ENCODE measurements at regions of chr11 and their contacts with region 1.

Region 1: GRCh38 chr11:71448257-71449171 is at the start of gene DHCR7:
- DNase-seq: peak; percentile 93 to 96 (median 95)
- H3K4me3 ChIP-seq: peak within 1 kb of the TSS; percentile 63 to 95 (median 87)
- H3K27ac ChIP-seq: peak within 1 kb of the TSS; percentile 58 to 78
- H3K4me1 ChIP-seq: peaks cover 13 to 57% (median 48%) of the 10 kb centered on the region in 4 experiments
- H3K27me3 ChIP-seq: no peaks in the 10 kb centered on the region

Region 2: GRCh38 chr11:71425855-71426254 is 22.7 kb before region 1 on chr11:
- CTCF ChIA-PET with region 1: no interaction called
- POLR2A ChIA-PET with region 1: no interaction called
- DNase-seq: no peak
- H3K4me3 ChIP-seq: no peak overlapping the region
- H3K27ac ChIP-seq: no peak overlapping the region
- H3K4me1 ChIP-seq: no peaks in the 10 kb centered on the region
- H3K27me3 ChIP-seq: peaks cover 0 to 7% (median 0%) of the 10 kb centered on the region in 5 experiments

Region 3: DNA sequence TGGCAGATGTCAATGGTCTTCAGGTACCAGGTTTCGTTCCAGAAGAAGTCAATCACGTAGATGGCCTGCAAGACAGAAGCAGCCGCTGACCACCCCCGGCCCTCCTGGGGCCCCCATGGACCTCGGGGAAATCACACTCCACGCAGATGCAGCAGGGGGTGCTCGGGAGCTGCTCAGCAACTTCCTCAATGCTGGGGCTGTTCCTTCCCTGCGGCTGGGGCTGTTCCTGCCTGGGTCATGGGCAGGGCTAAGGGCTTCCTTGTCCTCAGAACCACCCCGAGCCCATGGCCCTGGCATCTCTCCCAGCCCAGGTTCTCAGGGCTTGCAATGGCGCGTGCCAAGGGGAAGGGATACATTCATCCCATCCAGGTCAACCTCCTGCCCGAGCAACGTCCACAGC is 10.6 kb before region 1 on chr11:
- CTCF ChIA-PET with region 1: interaction called, 11 read pairs
- POLR2A ChIA-PET with region 1: no interaction called
- DNase-seq: no peak
- H3K4me3 ChIP-seq: no peak overlapping the region
- H3K27ac ChIP-seq: no peak overlapping the region
- H3K4me1 ChIP-seq: no peaks in the 10 kb centered on the region
- H3K27me3 ChIP-seq: no peaks in the 10 kb centered on the region

Region 4: DNA sequence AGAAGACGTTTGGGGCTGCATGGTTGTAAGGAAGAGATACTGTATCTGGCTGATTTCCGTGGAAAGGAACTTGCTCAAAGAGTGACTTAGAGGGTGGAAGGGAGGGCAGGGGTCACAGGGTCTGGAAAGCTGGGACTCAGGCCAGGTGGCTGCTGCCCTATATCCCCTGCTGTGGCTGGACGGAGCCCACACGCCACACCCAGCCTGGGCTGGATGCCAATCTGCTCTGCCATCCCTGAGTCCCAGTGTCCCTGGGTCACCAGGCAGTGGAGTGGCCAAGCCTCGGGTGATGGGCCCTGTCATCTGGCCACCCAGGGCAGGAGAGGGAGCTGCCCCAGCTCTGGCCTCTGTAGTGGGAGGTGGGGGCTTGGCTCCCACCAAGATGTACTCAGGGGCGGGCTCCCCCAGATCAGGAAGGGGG is 52.1 kb after region 1 on chr11:
- CTCF ChIA-PET with region 1: no interaction called
- POLR2A ChIA-PET with region 1: no interaction called
- DNase-seq: no peak
- H3K4me3 ChIP-seq: no peak overlapping the region
- H3K27ac ChIP-seq: no peak overlapping the region
- H3K4me1 ChIP-seq: no peaks in the 10 kb centered on the region
- H3K27me3 ChIP-seq: no peaks in the 10 kb centered on the region